ENCODE measurements at regions of chr6 and their contacts with region 1.

Region 1: DNA sequence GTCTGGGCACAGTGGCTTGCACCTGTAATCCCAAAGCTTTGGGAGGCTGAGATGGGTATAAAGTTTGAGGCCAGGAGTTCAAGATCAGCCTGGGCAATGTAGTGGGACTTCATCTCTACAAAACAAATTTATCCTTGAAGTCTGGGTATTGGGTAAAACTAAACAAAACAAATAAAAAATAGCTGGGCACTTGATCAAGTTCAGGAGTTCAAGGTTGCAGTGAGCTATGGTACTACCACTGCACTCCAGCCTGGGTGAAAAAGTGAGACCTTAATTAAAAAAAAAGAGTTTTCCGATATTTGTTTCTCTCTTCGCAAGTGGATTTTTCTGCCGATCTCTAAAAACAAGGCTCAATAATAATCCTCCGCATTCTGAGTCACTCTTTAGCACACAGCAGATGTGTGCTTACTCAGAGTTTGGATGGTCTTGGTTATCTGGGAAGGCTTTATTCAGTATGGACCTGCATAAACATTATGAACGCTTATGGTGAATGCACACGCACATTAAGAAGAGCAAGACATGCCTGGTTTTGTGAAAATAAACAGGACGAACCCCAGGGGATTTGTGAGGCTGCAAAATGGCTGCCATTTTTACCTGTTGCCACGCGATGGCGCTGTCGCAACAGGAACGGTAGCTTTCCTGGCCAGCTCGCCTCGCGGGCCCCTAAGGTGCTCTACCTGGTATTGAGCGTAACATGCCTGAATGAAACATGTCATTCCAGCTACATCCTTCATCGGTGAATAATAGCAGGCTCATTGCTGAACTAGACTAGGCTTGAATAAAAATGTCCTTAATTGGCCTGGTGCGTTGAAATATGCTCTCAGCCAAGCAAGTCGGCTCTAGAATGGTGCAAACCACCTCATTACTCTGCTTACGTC is 6.0 kb downstream of the OPN5 start:
- DNase-seq: peak; percentile 63 to 76 (median 68)
- ATAC-seq: peak; percentile 77
- H3K4me3 ChIP-seq: no peak overlapping the region
- H3K27ac ChIP-seq: no peak overlapping the region
- H3K4me1 ChIP-seq: no peaks in the 10 kb centered on the region
- H3K27me3 ChIP-seq: no peaks in the 10 kb centered on the region
- CTCF ChIP-seq: peak; percentile 75 to 91 (median 86)
- POLR2A ChIP-seq: no peak

Region 2: GRCh38 chr6:47413752-47414422 is 374.0 kb before region 1 on chr6:
- intact Hi-C with region 1: loop called (anchors 10 kb)
- DNase-seq: peak; percentile 43 to 60 (median 52)
- ATAC-seq: peak; percentile 85
- H3K4me3 ChIP-seq: peak overlapping the region in 1 of 2 donors; percentile 8
- H3K27ac ChIP-seq: peak overlapping the region in 3 of 4 donors; percentile 51 to 75 (median 75)
- H3K4me1 ChIP-seq: peaks cover 13% of the 10 kb centered on the region
- H3K27me3 ChIP-seq: no peaks in the 10 kb centered on the region
- CTCF ChIP-seq: peak; percentile 73 to 93 (median 90)
- POLR2A ChIP-seq: no peak

Region 3: GRCh38 chr6:47936820-47937219 is 149.0 kb after region 1 on chr6:
- intact Hi-C with region 1: no loop called
- DNase-seq: no peak
- ATAC-seq: no peak
- H3K4me3 ChIP-seq: no peak overlapping the region
- H3K27ac ChIP-seq: no peak overlapping the region
- H3K4me1 ChIP-seq: no peaks in the 10 kb centered on the region
- H3K27me3 ChIP-seq: no peaks in the 10 kb centered on the region
- CTCF ChIP-seq: no peak
- POLR2A ChIP-seq: no peak

Measured in body of pancreas (tissue), 4 donors.